GM10248 (cell line): ENCODE measurements at regions of chr6 and their contacts with region 1.

Region 1: GRCh38 chr6:110039364-110039980 is 61.4 kb downstream of the GPR6 start:
- DNase-seq: peak; percentile 79
- CTCF ChIP-seq: peak; percentile 89

Region 2: DNA sequence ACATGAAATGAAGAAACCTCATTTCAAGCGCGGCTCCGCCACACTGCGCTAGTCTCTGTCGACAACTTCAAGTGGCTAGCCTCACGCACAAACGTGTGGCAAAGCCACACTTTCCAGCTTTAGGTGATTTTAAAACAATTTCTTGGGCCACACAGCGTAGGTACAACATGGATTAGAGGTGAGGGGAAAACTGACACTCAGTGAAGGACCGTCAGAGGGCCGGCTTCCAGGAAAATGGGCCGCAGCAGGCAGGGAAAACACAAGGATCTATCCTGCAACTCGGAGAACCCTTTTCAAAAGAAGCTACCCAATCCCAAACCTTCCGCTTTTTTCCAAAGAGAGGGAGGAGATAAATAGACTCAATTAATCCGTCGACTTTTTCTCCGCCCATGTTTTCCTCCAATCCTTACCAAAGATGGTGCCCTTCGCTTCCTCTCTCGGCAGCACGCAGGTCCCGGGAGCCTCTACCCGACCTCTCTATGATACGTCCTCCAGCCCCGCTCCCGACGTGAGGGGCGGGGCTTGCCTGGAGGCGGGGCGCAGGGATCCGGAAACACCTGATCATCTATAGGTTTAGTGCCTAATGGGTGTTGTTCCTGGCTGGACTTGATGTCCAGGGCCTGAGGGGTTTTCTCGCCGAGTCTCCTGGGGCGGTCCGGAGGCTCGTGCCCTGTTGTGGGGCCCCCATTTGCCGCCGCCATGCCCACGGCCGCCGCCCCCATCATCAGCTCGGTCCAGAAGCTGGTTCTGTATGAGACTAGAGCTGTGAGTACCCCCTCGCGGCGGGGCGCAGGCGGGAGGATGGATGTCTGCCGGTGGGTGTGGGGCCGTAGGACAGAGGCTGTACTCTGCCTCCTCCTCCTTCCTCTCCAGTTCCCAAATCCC is 348.5 kb before region 1 on chr6 and contains the starts of genes AK9 and FIG4:
- CTCF ChIA-PET with region 1: interaction called, 298 read pairs
- POLR2A ChIA-PET with region 1: no interaction called
- DNase-seq: peak; percentile 92
- CTCF ChIP-seq: peak; percentile 24

Region 3: DNA sequence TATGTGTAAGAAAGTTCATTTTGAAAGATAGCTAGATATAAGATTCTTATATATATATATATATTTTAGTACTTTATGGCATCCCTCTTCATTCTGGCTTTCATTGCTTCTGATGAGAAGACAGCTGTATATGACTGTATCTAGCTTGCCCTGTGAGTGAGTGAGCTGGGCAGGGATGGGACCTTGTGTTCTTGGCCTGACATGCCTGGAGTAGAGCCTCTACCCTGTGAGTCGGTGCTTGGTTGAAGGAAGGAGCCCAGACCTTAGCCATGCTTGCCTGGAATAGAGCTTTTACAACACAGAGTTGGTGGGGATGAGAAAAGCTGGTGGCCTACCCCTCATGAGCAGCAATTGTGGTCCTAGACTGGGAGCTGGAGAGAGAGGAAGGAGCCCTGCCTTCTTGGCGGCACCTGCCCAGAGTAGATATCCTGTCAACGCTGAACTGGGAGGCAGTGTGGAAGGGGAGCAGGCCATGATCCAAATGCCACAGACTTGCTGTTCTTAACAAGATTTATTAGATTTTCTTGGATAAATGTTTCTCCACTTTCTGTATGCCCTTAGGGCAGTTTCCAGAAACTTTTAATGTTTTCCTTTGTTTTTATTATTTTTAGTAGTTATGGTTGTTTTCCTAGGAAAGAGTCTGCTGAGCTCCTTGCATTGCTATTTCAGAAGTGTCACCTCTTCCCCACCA is 316.8 kb before region 1 on chr6:
- CTCF ChIA-PET with region 1: interaction called, 15 read pairs
- POLR2A ChIA-PET with region 1: no interaction called
- DNase-seq: no peak
- CTCF ChIP-seq: no peak

Region 4: DNA sequence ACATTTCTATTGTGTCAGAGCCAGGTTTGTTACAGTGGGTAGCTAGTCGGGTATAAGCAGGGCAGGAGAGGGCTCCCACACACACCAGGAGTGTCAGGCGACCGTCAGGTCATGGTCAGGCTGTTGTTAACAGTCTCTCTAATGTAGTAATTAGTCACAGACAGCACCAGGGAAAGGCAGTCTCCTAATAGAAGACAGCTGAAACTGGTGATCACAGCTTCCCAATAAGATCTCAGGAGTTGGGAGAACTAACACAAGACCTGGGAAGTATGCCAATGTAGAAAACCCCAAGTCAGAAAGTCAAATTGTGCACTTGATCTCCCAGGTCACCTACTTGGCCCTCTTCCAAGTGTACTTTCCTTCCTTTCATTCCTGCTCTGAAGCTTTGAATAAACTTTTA is 114.4 kb before region 1 on chr6:
- CTCF ChIA-PET with region 1: no interaction called
- POLR2A ChIA-PET with region 1: no interaction called
- DNase-seq: no peak
- CTCF ChIP-seq: no peak

Region 5: DNA sequence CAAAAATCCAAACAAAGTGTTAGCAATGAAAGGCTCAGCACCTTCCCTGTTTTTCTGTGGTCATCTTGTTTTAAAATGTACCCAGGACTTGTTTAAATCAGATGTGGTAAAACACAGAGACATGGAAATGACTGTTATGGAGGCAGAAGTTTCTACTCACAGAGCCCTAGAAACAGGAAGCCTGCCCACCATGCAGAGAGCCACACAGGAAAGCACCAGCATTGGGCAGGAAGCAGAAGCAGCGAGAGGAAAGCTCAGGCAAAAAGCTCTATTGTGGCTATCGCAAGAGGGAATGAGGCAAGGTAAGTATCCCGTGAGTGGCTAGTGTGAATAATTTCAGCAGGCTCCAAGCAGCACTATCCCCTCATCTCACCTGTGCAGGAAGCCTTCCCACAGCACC is 18.6 kb before region 1 on chr6:
- CTCF ChIA-PET with region 1: interaction called, 24 read pairs
- POLR2A ChIA-PET with region 1: no interaction called
- DNase-seq: no peak
- CTCF ChIP-seq: no peak

Region 6: DNA sequence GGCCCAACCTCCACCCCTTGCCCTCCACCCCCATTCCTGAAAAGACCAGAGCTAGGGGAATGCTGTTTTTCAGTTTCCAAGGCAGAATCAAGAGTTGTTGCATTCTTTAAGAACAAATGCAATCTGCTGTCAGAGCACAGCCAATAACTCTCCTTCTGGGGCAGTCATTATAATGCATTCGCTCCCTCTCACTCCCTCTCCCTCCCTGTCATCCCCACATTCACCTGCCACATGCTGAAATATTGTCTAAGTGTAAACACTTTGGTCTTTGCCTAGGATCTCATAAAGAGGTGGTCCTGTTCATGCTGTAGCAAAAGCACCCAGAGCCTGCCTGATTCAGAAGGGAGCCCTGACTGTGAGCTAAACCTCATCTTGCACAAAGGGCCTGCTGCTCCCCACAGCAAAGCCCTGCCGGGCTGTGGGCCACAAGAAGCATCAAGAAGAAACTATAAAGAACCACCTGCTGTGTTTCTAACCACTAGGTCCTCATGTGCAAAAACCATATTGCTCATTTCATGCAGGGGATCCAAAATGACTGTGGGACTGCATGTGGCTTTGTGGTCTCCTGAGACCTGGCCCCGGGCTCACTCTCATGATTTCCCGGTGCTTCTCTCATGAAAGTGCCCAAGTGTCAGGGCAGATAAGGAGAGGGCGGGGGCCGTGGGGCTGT is 24.3 kb after region 1 on chr6:
- CTCF ChIA-PET with region 1: interaction called, 113 read pairs
- POLR2A ChIA-PET with region 1: no interaction called
- DNase-seq: no peak
- CTCF ChIP-seq: no peak

Region 7: DNA sequence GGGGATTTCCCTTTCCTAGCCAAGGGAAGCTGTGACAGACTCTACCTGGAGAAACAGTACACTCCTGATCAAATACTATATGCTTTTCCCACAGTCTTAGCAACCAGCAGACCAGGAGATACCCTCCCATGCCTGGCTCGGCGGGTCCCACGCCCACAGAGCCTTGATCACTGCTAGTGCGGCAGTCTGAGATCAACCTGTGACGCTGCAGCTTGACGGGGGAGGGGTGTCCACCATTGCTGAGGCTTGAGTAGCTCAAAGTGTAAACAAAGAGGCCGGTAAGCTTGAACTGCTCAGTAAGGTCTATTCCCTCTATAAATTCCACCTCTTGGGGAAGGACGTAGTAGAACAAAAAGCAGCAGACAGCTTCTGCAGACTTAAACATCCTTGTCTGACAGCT is 76.8 kb after region 1 on chr6:
- CTCF ChIA-PET with region 1: no interaction called
- POLR2A ChIA-PET with region 1: no interaction called
- DNase-seq: no peak
- CTCF ChIP-seq: no peak